Activated naive CD4-positive, alpha-beta T cell treated with anti-CD3 and anti-CD28 coated beads, Interleukin-2, amount 10 ng/mL, durations not matched to agents 7 days and 5 days (primary cell): ENCODE measurements at regions of chr11 and their contacts with region 1.

Region 1: DNA sequence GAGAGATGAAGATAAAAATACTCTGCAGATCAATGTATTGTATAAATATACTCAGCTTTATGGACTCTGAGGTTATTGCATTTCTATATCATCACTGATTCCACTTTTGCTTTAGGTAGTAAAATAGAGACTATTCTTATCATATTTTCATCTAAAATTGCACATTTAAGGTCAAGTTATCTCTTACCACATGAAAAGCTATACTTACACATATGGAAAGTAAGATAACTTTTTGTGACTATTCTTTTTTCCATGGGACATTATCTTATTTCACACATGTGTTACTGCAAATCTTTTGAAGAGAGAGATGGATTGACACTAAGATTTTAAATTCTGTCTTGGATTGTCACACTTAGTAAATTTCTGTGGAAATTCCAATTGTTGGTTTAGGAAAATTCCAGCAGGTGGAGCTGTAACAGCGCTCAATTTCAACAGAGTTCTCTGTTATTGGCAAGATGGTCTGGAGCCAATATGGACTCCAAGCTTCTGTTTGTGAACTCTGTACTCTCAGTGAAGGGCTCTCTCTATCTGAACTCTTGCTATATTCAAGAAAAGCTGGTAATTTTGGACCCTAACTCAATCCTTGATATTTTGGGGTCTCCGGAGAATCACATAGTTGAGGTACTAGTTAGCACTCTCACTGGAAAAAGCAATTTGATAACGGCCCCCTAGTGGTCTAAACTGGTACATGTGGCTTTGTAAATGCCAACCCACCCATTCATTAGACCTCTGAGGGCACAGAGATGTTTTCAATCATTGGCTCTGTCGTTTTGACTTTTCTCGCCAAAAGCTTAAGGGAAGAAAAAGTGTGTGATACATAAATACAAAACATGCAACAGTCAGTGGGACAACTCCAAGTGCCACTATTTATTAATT is 429.7 kb downstream of the ETS1 start:
- DNase-seq: peak; percentile 66
- H3K4me3 Mint-ChIP-seq: peak overlapping the region; percentile 60
- H3K27ac Mint-ChIP-seq: peak overlapping the region; percentile 63
- H3K4me1 Mint-ChIP-seq: peaks cover 7% of the 10 kb centered on the region
- H3K27me3 Mint-ChIP-seq: peaks cover 21% of the 10 kb centered on the region

Region 2: GRCh38 chr11:128026596-128026995 is 131.1 kb before region 1 on chr11:
- CTCF ChIA-PET with region 1: interaction called, 77 read pairs
- DNase-seq: no peak
- H3K4me3 Mint-ChIP-seq: no peak overlapping the region
- H3K27ac Mint-ChIP-seq: no peak overlapping the region
- H3K4me1 Mint-ChIP-seq: peaks cover 10% of the 10 kb centered on the region
- H3K27me3 Mint-ChIP-seq: peaks cover 23% of the 10 kb centered on the region

Region 3: GRCh38 chr11:128047026-128047425 is 110.6 kb before region 1 on chr11:
- CTCF ChIA-PET with region 1: interaction called, 14 read pairs
- DNase-seq: no peak
- H3K4me3 Mint-ChIP-seq: no peak overlapping the region
- H3K27ac Mint-ChIP-seq: no peak overlapping the region
- H3K4me1 Mint-ChIP-seq: peaks cover 55% of the 10 kb centered on the region
- H3K27me3 Mint-ChIP-seq: no peaks in the 10 kb centered on the region

Region 4: GRCh38 chr11:128135451-128135850 is 22.2 kb before region 1 on chr11:
- CTCF ChIA-PET with region 1: interaction called, 10 read pairs
- DNase-seq: no peak
- H3K4me3 Mint-ChIP-seq: no peak overlapping the region
- H3K27ac Mint-ChIP-seq: no peak overlapping the region
- H3K4me1 Mint-ChIP-seq: peaks cover 16% of the 10 kb centered on the region
- H3K27me3 Mint-ChIP-seq: no peaks in the 10 kb centered on the region

Region 5: GRCh38 chr11:128172046-128172878 is 14.6 kb after region 1 on chr11:
- CTCF ChIA-PET with region 1: interaction called, 84 read pairs
- DNase-seq: peak; percentile 92
- H3K4me3 Mint-ChIP-seq: no peak overlapping the region
- H3K27ac Mint-ChIP-seq: no peak overlapping the region
- H3K4me1 Mint-ChIP-seq: peaks cover 2% of the 10 kb centered on the region
- H3K27me3 Mint-ChIP-seq: peaks cover 7% of the 10 kb centered on the region

Region 6: DNA sequence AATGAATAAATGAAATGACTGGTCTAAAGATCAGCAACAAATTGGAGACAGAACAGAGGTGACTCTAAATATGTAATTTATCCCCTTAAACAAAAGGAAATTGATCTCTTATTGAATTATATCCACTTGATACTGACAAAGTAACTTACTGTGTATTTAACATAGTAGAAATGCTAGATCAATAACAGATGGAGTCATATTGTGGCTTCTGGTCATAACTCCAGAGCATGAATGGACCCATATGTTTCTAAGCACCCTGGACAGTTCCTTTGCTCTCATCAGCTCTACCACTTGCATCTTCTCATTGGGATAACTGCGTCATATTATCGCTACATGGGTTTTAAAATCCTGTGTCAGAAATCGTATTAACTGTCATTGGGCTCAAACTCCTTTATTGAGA is 207.4 kb after region 1 on chr11:
- CTCF ChIA-PET with region 1: no interaction called
- DNase-seq: peak; percentile 26
- H3K4me3 Mint-ChIP-seq: no peak overlapping the region
- H3K27ac Mint-ChIP-seq: no peak overlapping the region
- H3K4me1 Mint-ChIP-seq: peaks cover 10% of the 10 kb centered on the region
- H3K27me3 Mint-ChIP-seq: no peaks in the 10 kb centered on the region

Region 7: DNA sequence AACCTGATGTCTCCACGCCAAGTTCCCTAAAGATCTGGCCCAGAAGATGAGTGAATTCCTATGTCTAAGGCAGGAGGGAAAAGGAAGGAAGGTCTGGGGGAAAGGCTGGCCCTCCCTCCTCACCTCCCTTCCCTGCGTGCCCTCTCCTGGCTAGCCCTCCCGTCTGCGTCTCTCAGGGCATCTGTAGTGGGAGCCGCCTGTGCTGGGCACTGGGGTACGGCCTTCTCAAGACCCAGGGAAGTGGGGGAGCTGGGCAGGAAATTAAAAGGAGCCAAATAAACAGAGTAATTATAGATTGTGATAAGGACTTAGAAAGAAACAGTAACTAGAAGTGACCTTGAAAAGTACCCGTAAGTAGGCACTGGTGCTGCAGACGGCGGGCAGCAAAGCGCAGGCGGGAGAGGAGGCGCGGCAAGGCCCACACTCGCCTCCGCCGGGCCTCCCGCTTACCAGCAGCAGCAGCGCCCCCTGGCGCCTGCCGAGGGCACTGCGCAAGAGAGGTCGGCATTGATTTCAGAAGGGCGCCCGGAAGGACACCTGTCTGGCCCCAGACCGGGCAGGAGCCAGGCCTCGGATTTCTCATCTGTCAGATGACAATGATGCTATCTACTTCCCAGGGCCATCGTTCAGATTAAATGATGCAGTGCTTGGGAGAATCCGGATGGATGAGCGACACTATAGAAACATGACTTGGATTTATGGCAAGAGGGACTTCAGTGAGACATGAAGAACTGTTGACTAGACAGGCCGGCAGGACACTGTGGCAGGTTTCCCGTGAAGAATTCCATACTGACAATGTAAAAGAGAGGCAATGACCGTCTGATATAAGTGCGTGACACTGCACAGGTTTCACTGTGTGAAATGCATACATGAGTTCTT is 702.1 kb after region 1 on chr11:
- CTCF ChIA-PET with region 1: interaction called, 21 read pairs
- DNase-seq: peak; percentile 81
- H3K4me3 Mint-ChIP-seq: no peak overlapping the region
- H3K27ac Mint-ChIP-seq: no peak overlapping the region
- H3K4me1 Mint-ChIP-seq: peaks cover 8% of the 10 kb centered on the region
- H3K27me3 Mint-ChIP-seq: peaks cover 61% of the 10 kb centered on the region